Activated T-helper 2 cell treated with anti-CD3 and anti-CD28 coated beads, Interferon-gamma antibody, Interleukin-2, Interleukin-4, amounts not matched to agents 10 μg/mL and 5 μg/mL and 100 μg/mL, durations not matched to agents 14 hours and 24 hours and 36 hours (primary cell): ENCODE measurements at regions of chr9 and their contacts with region 1.

Region 1: DNA sequence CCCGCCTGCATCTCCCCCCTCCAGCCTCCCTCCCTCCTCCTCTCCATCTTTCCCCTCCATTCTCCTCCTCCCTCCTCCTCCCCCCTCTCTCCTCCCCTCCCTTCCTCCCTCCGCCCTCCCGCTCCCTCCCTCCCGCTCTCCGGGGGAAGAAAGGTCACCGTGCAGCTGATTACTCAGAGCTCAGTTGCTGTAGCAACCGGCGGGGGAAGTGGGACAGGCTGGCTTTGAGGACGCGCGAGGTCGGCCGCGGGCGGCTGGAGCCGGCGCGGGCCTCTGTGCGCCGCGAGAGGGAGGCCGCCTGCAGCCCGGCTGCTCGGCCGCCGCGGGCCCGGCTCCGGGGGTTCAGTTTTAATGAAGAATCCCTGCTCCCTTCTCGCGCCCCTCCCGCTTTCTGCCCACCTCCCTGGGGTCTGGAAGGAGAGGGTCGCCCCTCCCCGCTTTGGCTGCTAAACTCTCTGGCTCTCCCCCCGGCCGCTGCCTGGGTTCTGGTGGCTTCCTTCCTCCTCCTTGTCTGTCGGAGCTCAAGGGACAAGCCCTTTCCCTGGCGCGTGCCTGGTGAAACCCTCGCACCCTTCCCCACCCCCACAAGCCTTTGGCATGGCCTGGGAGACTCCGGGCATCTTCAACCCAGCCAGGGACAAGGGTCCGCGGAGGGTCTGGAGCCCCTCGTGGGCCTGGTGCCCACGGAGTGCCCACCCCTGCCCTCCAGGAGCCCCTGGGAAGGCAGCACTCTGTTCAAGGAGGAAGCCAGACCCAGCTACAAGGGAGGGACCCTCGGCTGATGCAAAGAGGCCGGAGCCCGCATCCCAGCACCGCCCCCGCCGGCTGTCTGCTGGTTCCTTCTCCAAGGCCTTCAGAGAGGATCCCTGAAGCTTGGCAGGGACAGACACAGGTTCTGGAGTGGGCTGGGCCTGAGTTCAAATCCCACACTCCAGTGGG is 160.3 kb downstream of the C9orf50 start:
- DNase-seq: peak; percentile 81
- H3K4me3 Mint-ChIP-seq: peak overlapping the region; percentile 74
- H3K27ac Mint-ChIP-seq: peak overlapping the region; percentile 88
- H3K4me1 Mint-ChIP-seq: peaks cover 32% of the 10 kb centered on the region
- H3K27me3 Mint-ChIP-seq: peaks cover 3% of the 10 kb centered on the region

Region 2: DNA sequence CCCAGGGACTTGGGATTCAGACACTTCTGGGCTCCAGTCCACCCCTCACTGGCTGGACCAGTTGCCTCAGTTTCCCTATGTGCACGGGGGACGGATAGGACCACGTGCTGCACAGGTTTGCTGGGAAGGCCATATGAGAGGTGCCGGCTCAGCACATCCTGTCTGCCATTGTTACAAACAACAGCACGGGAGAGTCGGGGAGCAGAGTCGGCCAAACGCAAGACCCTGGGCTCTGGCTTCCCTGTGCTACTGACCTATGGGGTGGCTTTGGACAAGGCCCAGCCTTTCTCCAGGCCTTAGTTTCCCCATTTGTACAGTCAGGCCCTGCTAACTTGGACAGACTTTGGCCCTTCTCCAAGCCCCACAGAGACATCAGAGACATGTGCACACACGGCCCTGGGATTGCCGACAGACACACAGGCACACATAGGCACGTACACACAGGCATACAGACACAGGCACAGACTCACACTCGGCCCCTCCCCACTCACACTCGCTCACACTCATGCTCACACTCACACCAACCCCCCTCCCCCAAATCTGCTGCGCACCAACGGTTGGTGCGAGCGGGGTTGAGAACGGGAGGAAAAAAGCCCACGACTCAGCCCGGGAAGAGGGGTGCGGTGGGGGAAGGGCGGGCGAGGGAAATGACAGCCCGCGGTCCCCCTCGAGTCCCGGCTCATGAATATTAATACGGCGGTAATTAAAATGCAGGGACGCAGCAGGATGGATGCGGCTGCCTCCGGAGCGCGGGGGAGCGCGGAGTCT is 27.2 kb after region 1 on chr9:
- intact Hi-C with region 1: loop called (anchors 2 kb)
- DNase-seq: peak; percentile 28
- H3K4me3 Mint-ChIP-seq: peak overlapping the region; percentile 91
- H3K27ac Mint-ChIP-seq: peak overlapping the region; percentile 100
- H3K4me1 Mint-ChIP-seq: peaks cover 52% of the 10 kb centered on the region
- H3K27me3 Mint-ChIP-seq: no peaks in the 10 kb centered on the region

Region 3: GRCh38 chr9:129850821-129851540 is 390.4 kb after region 1 on chr9:
- intact Hi-C with region 1: no loop called
- DNase-seq: no peak
- H3K4me3 Mint-ChIP-seq: no peak overlapping the region
- H3K27ac Mint-ChIP-seq: no peak overlapping the region
- H3K4me1 Mint-ChIP-seq: peaks cover 28% of the 10 kb centered on the region
- H3K27me3 Mint-ChIP-seq: no peaks in the 10 kb centered on the region